Endothelial cell of umbilical vein (primary cell): ENCODE measurements at regions of chr4 and their contacts with region 1.

Region 1: GRCh38 chr4:7802093-7802726 is 137.5 kb downstream of the AFAP1 start:
- DNase-seq: peak; percentile 86
- H3K4me3 ChIP-seq: no peak overlapping the region
- H3K27ac ChIP-seq: no peak overlapping the region
- H3K4me1 ChIP-seq: peaks cover 42% of the 10 kb centered on the region
- H3K27me3 ChIP-seq: no peaks in the 10 kb centered on the region
- CTCF ChIP-seq: peak; percentile 86 to 91
- POLR2A ChIP-seq: no peak

Region 2: DNA sequence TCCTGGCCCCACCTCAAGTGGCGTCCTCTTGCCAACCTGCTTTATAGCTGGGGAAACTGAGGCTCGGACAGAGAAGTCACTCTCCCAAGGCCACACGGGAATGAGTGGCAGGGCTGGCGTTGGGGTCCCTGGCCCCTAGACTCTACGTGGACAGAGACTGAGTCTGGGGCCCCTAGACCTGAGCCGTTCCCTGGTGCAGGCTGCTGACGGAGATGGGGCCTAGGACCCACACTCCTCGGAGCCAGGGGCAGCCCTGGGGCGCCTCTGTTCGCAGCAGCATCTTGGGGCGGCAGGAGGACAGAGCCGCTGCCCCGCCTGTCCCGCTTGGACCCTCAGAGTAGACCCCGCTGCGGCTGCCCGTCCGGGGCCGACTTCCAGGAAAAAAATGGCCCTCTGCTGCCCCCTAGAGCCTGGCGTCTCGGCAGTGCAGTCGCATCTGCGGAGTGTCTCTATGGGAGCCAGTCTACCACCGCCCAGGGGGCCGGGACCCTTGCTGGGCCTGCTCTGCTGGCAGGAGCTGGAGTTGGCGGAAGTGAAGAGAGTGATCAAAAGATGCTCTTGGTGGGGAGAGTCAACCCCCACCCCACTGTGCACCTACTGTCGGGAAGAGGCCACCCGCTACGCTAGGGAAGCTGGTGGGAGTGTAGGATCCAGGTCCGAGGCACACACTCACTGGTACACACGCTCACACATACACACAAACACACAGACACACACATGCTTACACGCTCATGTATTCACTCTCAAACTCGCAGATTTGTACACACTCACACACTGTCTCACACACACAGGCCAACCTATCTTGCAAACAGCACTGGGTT is 82.6 kb before region 1 on chr4:
- CTCF ChIA-PET with region 1: interaction called, 7 read pairs
- POLR2A ChIA-PET with region 1: no interaction called
- dilution Hi-C with region 1: no loop called
- intact Hi-C with region 1: loop called (anchors 1 kb)
- DNase-seq: peak; percentile 24
- H3K4me3 ChIP-seq: no peak overlapping the region
- H3K27ac ChIP-seq: no peak overlapping the region
- H3K4me1 ChIP-seq: peaks cover 10% of the 10 kb centered on the region
- H3K27me3 ChIP-seq: peaks cover 0 to 1% of the 10 kb centered on the region in 2 experiments
- CTCF ChIP-seq: peak; percentile 75 to 83
- POLR2A ChIP-seq: no peak

Region 3: DNA sequence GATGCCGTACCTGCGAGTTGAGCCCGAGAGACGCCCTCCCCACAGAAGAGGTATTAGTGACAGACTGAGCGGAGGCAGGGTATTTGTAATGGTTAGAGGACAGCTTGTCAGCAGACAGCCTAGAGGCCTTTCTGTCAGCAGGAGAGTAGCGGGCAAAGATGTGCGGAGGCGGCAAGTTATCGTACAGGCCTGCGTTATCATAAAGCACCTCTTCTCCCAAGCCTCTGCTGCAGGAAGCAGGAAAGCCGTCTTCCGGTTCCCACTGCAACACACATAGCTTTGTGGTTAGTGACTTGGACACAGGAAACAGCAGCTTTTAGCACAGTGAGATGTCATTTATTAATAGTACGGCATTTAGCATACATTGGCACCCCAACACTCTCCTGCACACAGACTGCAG is 20.8 kb before region 1 on chr4:
- CTCF ChIA-PET with region 1: interaction called, 16 read pairs
- POLR2A ChIA-PET with region 1: no interaction called
- dilution Hi-C with region 1: no loop called
- intact Hi-C with region 1: loop called (anchors 1 kb)
- DNase-seq: peak; percentile 78
- H3K4me3 ChIP-seq: no peak overlapping the region
- H3K27ac ChIP-seq: peak overlapping the region; percentile 93
- H3K4me1 ChIP-seq: peaks cover 62% of the 10 kb centered on the region
- H3K27me3 ChIP-seq: no peaks in the 10 kb centered on the region
- CTCF ChIP-seq: no peak
- POLR2A ChIP-seq: no peak

Region 4: GRCh38 chr4:7843831-7844593 is 41.8 kb after region 1 on chr4:
- CTCF ChIA-PET with region 1: interaction called, 212 read pairs
- POLR2A ChIA-PET with region 1: interaction called, 13 read pairs
- dilution Hi-C with region 1: no loop called
- intact Hi-C with region 1: loop called (anchors 1 kb)
- DNase-seq: peak; percentile 91
- H3K4me3 ChIP-seq: peak overlapping the region in 1 of 3 experiments; percentile 24
- H3K27ac ChIP-seq: peak overlapping the region; percentile 98
- H3K4me1 ChIP-seq: peaks cover 60% of the 10 kb centered on the region
- H3K27me3 ChIP-seq: no peaks in the 10 kb centered on the region
- CTCF ChIP-seq: peak; percentile 80 to 86
- POLR2A ChIP-seq: no peak

Region 5: DNA sequence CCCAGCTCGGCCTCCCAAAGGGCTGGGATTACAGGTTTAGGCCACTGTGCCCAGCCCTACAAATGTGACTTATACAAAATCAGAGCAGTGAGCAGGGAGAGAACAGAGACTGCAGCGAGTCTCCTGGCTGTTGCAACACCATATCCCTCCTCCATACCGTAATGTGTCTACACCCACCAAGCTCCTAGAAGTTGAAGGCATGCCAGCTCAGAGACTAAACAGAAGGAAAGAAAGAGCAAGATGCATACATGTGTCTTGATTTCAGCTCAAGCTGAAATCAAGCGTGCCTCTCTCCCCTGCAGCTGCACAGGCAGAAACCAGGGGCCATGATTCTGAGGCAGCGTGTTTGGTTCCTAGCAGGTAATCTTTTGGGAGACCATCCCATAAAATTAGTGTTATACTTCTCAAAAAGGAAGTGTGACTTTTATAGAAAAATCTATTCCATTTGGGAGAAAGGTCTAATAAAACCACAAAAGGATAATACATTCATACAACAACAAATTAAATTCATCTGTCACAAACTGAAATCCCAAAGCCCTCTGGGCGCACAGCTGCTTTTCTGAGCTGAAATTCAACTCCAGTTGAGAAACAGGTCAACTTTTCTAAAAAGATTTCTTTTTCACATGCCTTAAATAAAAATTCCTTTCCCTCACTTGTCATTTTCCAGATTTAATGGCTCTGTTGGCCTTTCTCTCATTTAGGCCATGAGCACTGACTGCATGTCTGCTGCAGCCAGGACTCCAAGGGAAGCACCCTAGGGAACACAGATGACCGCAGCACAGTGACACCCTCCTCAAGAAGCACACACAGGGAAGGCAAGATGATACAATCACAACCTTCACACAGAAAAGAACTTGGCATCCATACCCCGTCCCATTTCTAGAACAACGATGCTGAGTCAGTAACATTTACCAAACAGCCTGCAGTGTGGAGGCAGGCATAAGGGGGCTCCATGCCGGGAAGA is 103.0 kb after region 1 on chr4:
- CTCF ChIA-PET with region 1: interaction called, 10 read pairs
- POLR2A ChIA-PET with region 1: no interaction called
- dilution Hi-C with region 1: no loop called
- intact Hi-C with region 1: loop called (anchors 1 kb)
- DNase-seq: no peak
- H3K4me3 ChIP-seq: no peak overlapping the region
- H3K27ac ChIP-seq: peak overlapping the region; percentile 75
- H3K4me1 ChIP-seq: peaks cover 94% of the 10 kb centered on the region
- H3K27me3 ChIP-seq: no peaks in the 10 kb centered on the region
- CTCF ChIP-seq: no peak
- POLR2A ChIP-seq: no peak

Region 6: DNA sequence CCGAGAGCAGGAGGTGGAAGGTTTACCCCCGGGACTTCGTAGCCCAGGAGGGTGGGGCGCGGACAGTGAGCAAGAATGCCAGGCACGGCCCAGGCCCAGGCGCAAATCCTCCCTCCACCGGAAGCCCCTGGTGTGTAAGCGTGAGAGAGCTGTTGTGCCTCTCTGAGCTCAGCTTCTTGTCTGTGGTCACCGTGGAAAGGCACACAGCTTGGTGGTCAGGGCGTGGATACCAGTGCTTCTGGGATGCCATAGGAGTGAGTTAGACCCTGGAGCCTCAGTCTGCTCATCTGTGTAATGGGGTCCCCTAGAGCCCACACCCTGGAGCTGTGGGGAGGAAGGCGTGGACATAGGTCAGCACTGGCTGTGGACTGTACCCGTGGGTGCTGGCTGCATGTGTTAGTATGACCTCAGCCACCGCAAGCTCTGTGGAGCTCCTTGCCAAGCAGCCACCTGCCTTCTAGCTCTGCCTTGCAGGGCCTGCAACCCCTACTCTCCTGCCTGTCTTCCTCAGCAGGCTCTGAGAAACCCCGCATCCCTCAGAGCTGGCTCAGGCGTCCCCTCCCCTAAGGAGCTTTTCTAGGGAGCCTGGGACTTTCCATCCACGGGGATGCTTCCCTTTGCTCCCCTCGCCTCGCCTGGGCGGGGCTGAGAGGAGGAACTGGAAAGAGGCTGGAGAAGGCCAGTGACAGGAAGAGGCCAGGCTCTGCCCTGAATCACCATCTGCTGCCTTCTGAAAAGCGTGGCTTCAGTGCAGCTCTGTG is 165.5 kb after region 1 on chr4:
- CTCF ChIA-PET with region 1: interaction called, 20 read pairs
- POLR2A ChIA-PET with region 1: no interaction called
- dilution Hi-C with region 1: no loop called
- intact Hi-C with region 1: loop called (anchors 1 kb)
- DNase-seq: peak; percentile 74
- H3K4me3 ChIP-seq: no peak overlapping the region
- H3K27ac ChIP-seq: peak overlapping the region; percentile 89
- H3K4me1 ChIP-seq: peaks cover 48% of the 10 kb centered on the region
- H3K27me3 ChIP-seq: no peaks in the 10 kb centered on the region
- CTCF ChIP-seq: no peak
- POLR2A ChIP-seq: no peak